HepG2 (cell line): ENCODE measurements at regions of chr19 and their contacts with region 1.

Region 1: GRCh38 chr19:1094975-1095701 is at the start of gene POLR2E:
- DNase-seq: peak; percentile 94
- ATAC-seq: peak; percentile 73
- H3K4me3 ChIP-seq: peak within 1 kb of the TSS; percentile 91 to 99 (median 97)
- H3K27ac ChIP-seq: peak within 1 kb of the TSS; percentile 57
- H3K4me1 ChIP-seq: peaks cover 55% of the 10 kb centered on the region
- H3K27me3 ChIP-seq: no peaks in the 10 kb centered on the region; a peak in 1 of 5 replicates
- CTCF ChIP-seq: no peak
- EP300 ChIP-seq: peak in 1 of 2 experiments; percentile 48; a peak in 1 of 4 replicates
- POLR2A ChIP-seq: peak; percentile 62 to 74
- RAD21 ChIP-seq: no peak; the same call in 1 of the 2 replicates
- total RNA-seq, gene POLR2E: 140 TPM in 2 replicates

Region 2: DNA sequence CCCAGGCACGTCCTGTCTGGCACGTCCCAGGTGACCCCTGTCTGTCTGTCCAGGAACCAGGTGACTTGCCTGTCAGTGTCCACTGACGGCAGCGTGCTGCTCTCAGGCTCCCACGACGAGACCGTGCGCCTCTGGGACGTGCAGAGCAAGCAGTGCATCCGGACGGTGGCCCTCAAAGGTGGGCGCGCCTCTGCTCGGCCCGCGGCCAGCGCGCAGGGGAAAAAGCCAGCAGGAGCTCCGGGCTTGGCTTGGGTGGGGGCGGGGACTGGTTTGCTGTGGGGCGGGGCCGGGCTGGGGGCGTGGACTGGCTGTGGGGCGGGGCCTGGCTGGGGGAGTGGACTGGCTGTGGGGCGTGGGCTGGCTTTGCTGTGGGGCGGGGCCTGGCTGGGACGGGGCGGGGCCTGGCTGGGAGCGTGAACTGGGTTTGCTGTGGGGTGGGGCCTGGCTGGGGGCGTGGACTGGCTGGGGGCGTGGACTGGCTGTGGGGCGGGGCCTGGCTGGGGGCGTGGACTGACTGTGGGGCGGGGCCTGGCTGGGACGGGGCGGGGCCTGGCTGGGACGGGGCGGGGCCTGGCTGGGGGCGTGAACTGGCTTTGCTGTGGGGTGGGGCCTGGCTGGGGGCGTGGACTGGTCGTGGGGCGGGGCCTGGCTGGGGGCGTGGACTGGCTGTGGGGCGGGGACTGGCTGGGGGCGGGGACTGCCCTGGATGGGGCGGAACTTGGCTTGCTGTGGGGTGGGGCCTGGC is 103.8 kb before region 1 on chr19:
- CTCF ChIA-PET with region 1: no interaction called
- POLR2A ChIA-PET with region 1: no interaction called
- in situ Hi-C with region 1: no loop called
- intact Hi-C with region 1: no loop called
- DNase-seq: no peak
- ATAC-seq: no peak; the same call in 2 of the 3 replicates
- H3K4me3 ChIP-seq: no peak overlapping the region
- H3K27ac ChIP-seq: no peak overlapping the region
- H3K4me1 ChIP-seq: peaks cover 32% of the 10 kb centered on the region
- H3K27me3 ChIP-seq: no peaks in the 10 kb centered on the region
- CTCF ChIP-seq: no peak
- EP300 ChIP-seq: no peak
- POLR2A ChIP-seq: no peak
- RAD21 ChIP-seq: no peak

Region 3: DNA sequence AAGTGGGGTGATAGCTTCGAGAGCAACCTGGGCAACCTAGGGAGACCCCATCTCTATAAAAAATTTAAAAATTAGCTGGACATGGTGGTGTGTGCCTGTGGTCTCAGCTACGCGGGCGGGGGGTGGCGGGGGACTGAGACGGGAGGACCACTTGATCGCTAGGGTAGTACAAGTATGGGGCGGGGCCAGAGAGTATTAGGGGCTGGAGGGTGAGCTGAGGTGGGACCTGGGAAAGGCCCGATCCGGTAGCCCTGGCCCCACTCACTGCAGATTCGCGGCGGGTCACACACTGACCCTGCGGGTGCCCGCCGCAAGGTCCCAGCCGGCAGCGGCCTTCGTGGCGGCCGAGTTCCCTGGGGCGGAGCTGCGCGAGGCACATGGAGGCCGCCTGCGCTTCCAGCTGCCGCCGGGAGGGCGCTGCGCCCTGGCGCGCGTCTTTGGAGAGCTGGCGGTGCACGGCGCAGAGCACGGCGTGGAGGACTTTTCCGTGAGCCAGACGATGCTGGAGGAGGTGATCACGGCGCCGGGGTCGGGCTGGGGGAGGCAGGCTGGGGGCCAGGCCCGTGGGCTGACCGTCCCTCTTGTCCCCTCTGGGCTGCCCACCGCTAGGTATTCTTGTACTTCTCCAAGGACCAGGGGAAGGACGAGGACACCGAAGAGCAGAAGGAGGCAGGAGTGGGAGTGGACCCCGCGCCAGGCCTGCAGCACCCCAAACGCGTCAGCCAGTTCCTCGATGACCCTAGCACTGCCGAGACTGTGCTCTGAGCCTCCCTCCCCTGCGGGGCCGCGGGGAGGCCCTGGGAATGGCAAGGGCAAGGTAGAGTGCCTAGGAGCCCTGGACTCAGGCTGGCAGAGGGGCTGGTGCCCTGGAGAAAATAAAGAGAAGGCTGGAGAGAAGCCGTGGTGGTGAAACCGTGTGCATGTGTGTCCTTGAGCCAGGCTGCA is 30.2 kb before region 1 on chr19:
- CTCF ChIA-PET with region 1: no interaction called
- POLR2A ChIA-PET with region 1: interaction called, 10 read pairs
- in situ Hi-C with region 1: loop called (anchors 5 kb)
- intact Hi-C with region 1: no loop called
- DNase-seq: no peak
- ATAC-seq: peak; percentile 53
- H3K4me3 ChIP-seq: peak overlapping the region in 2 of 3 experiments; percentile 33 to 78; a peak in 4 of 6 replicates
- H3K27ac ChIP-seq: peak overlapping the region; percentile 6
- H3K4me1 ChIP-seq: peaks cover 37% of the 10 kb centered on the region
- H3K27me3 ChIP-seq: no peaks in the 10 kb centered on the region
- CTCF ChIP-seq: peak; percentile 77
- EP300 ChIP-seq: no peak
- POLR2A ChIP-seq: no peak
- RAD21 ChIP-seq: peak; percentile 57

Region 4: DNA sequence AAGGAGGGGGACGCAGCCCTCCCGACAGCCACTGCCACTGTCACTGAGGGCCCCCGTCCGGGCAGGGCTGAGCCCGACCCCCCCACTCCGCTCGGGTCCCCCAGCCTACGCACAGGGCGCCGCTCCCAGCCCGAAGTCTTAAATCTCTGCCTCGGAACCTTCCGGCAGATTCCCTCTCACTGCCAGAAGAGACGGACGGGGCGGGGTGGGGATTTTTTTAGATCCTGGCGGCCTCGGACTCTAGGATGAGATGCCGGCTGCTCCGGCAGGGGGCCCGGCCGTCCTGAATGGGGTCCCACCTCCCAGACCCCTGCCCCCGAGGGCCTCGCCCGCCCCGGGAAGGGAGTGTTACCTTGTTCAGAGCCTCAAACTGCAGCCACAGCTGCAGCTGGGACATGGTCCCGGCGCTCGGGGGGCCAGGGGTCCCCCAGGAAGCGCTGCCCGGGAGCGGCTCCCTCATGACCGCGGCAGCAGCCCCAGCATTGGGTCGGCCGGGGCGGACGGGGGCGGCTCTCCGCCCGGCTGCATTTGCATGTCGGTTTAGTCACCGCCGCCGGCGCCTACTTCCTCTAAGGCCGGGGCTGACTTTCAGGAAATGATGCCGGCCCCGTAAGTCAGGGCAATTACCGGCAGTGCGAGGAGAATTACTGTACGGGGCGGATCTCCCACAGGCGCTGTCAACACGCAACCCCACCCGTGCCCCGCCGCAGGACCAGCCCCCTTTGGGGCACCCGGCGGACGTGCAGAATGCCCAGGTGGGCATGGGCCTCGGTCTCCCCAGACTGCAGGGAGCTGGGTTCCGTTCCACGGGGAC is 36.8 kb after region 1 on chr19:
- CTCF ChIA-PET with region 1: no interaction called
- POLR2A ChIA-PET with region 1: no interaction called
- in situ Hi-C with region 1: no loop called
- intact Hi-C with region 1: no loop called
- DNase-seq: no peak
- ATAC-seq: no peak
- H3K4me3 ChIP-seq: no peak overlapping the region
- H3K27ac ChIP-seq: no peak overlapping the region
- H3K4me1 ChIP-seq: peaks cover 16% of the 10 kb centered on the region; the same call in 1 of the 2 replicates
- H3K27me3 ChIP-seq: no peaks in the 10 kb centered on the region
- CTCF ChIP-seq: no peak
- EP300 ChIP-seq: no peak
- POLR2A ChIP-seq: no peak
- RAD21 ChIP-seq: no peak

Region 5: GRCh38 chr19:1713170-1713569 is 618.0 kb after region 1 on chr19:
- CTCF ChIA-PET with region 1: no interaction called
- POLR2A ChIA-PET with region 1: no interaction called
- in situ Hi-C with region 1: no loop called
- intact Hi-C with region 1: loop called (anchors 5 kb)
- DNase-seq: no peak
- ATAC-seq: no peak
- H3K4me3 ChIP-seq: no peak overlapping the region
- H3K27ac ChIP-seq: no peak overlapping the region
- H3K4me1 ChIP-seq: no peaks in the 10 kb centered on the region
- H3K27me3 ChIP-seq: peaks cover 0 to under 1% of the 10 kb centered on the region in 2 experiments; a peak in 1 of 5 replicates
- CTCF ChIP-seq: no peak
- EP300 ChIP-seq: no peak
- POLR2A ChIP-seq: no peak
- RAD21 ChIP-seq: no peak